RWPE1 (cell line): ENCODE measurements at regions of chr5 and their contacts with region 1.

Region 1: DNA sequence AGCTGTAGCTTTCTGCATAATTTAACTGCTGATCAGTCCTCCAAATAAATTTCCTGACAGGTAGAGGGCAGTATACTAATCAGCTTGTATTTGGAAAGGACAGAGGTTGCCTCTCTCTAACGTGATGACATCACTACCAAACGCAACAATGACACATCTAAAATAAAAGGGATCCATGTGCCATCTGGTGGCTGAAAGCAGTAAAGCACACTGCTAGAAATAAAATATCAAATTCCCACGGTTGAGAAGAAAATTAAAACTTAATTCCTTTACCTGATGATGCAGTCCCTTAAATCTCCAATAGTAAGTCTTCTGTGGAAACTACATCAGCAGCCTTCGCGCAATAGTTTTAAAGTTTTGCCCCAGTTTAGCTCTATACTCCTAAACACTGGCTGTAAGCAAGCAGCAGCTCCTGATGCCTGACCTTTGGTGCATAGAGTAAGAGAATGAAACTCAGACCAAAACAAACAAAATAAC is 54.5 kb downstream of the DIAPH1 start:
- DNase-seq: peak; percentile 80
- H3K27ac ChIP-seq: no peak overlapping the region
- CTCF ChIP-seq: peak; percentile 97

Region 2: DNA sequence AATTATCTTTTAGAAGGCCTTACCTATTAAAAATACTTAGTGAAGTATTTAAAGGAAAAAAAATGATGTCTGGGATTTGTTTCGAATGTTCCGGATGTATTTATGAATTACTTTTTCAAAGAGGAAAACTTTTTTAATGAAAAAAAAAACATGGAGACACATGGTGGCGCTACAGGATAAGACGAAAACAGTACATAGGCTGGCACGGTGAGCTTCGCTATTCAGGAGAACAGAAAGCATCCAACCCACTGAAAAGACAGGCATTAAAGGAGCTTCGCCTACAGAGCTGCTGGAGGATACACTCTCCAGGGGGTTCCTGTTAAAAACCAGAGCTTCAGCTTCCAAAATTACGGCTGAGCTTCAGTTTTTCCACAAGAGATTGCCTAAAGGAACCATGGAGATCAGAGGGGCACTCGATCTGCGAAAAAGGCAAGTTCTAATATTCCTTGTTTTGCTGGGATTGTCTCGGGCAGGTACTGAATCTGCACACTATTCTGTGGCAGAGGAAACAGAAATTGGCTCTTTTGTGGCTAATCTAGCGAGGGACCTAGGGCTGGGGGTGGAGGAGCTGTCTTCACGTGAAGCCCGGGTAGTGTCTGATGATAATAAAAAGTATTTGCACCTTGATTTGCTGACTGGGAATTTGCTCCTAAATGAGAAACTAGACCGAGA is 341.0 kb before region 1 on chr5 and contains the start of gene PCDHB14:
- CTCF ChIA-PET with region 1: interaction called, 12 read pairs
- POLR2A ChIA-PET with region 1: no interaction called
- DNase-seq: peak; percentile 60
- H3K27ac ChIP-seq: no peak within 1 kb of the TSS
- CTCF ChIP-seq: peak; percentile 57; the same call in 1 of the 2 replicates

Region 3: GRCh38 chr5:141359790-141360426 is 204.3 kb before region 1 on chr5 and contains the start of gene PCDHGB2:
- CTCF ChIA-PET with region 1: interaction called, 16 read pairs
- POLR2A ChIA-PET with region 1: no interaction called
- DNase-seq: peak; percentile 41
- H3K27ac ChIP-seq: peak within 1 kb of the TSS; percentile 61
- CTCF ChIP-seq: peak; percentile 69

Region 4: GRCh38 chr5:141402553-141403260 is 161.5 kb before region 1 on chr5 and contains the start of gene PCDHGA9:
- CTCF ChIA-PET with region 1: interaction called, 13 read pairs
- POLR2A ChIA-PET with region 1: no interaction called
- DNase-seq: peak; percentile 47
- H3K27ac ChIP-seq: no peak within 1 kb of the TSS
- CTCF ChIP-seq: peak; percentile 23; the same call in 1 of the 2 replicates

Region 5: DNA sequence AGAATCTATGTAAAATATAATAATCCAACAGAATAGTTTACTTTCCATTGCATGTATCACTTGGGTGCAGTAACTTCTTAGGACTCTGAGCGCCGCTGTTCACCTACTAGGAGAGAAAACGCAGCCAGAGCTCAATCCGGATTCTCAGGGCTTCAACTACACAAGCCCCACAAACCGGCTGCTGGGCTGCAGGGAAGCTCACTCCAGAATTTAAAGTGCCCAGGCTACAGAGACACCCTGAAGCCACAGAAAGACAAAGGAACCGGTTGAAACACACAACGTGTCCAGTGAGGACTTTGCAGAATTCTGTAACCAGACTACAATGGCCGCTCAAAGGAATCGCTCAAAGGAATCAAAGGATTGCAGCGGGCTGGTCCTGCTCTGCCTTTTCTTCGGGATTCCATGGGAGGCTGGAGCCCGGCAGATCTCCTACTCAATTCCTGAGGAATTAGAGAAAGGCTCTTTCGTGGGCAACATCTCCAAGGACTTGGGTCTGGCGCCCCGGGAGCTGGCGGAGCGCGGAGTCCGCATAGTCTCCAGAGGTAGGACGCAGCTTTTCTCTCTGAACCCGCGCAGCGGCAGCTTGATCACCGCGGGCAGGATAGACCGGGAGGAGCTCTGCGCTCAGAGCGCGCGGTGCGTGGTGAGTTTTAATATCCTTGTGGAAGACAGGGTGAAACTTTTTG is 151.3 kb before region 1 on chr5 and contains the start of gene PCDHGA10:
- CTCF ChIA-PET with region 1: interaction called, 11 read pairs
- POLR2A ChIA-PET with region 1: no interaction called
- DNase-seq: peak; percentile 29
- H3K27ac ChIP-seq: no peak within 1 kb of the TSS
- CTCF ChIP-seq: no peak